Activated T-helper 2 cell treated with anti-CD3 and anti-CD28 coated beads, Interferon-gamma antibody, Interleukin-2, Interleukin-4, amounts not matched to agents 10 μg/mL and 5 μg/mL and 100 μg/mL, durations not matched to agents 14 hours and 24 hours and 36 hours (primary cell): ENCODE measurements at regions of chr6 and their contacts with region 1.

Region 1: DNA sequence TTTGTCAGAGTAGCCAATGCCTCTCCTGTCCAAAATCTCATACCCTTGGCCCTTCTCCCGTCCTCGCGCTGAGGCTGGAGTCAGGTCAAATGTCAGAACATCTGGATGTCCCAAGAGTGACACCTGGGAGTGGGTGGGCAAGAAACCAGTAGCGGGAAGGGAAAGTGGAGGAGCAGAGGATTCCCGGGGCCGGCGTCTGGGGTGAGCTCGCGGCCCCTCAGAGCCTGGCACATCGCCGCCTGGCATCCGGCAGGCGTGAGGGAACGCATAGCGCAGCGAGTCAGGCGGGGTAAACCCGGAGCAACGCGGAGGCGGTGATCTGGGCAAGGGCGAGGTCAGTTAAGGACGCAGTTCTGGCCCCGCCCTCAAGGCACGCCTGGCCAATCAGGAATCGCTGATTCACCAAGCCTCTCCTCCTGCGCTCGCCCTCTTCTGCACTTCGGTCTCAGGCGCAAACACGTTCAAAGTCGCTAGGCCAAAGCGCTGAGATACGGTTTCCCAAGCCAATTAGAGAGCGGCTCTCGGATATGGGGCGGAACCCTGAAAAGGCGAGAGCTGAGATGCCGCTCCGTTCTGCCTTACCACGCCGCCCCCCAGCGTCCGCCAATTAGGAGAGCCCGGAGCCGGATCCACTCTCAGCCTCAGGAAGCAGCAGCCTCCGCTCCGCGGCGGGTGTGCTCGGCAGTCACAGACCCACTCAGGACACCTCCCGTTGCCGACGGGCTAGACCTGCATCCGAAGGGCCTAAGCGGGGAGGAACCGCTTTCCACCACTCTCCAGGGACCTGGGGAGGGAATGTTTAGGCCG is 22.5 kb downstream of the VPS52 start:
- DNase-seq: peak; percentile 97
- H3K4me3 Mint-ChIP-seq: peak overlapping the region; percentile 88
- H3K27ac Mint-ChIP-seq: peak overlapping the region; percentile 92
- H3K4me1 Mint-ChIP-seq: peaks cover 32% of the 10 kb centered on the region
- H3K27me3 Mint-ChIP-seq: no peaks in the 10 kb centered on the region

Region 2: GRCh38 chr6:33118525-33119123 is 130.5 kb before region 1 on chr6:
- intact Hi-C with region 1: loop called (anchors 1 kb)
- DNase-seq: no peak
- H3K4me3 Mint-ChIP-seq: no peak overlapping the region
- H3K27ac Mint-ChIP-seq: no peak overlapping the region
- H3K4me1 Mint-ChIP-seq: peaks cover 6% of the 10 kb centered on the region
- H3K27me3 Mint-ChIP-seq: peaks cover 61% of the 10 kb centered on the region

Region 3: GRCh38 chr6:33161354-33162331 is 87.5 kb before region 1 on chr6:
- intact Hi-C with region 1: loop called (anchors 1 kb)
- DNase-seq: peak; percentile 77
- H3K4me3 Mint-ChIP-seq: peak overlapping the region; percentile 83
- H3K27ac Mint-ChIP-seq: peak overlapping the region; percentile 80
- H3K4me1 Mint-ChIP-seq: peaks cover 14% of the 10 kb centered on the region
- H3K27me3 Mint-ChIP-seq: peaks cover under 1% of the 10 kb centered on the region

Region 4: DNA sequence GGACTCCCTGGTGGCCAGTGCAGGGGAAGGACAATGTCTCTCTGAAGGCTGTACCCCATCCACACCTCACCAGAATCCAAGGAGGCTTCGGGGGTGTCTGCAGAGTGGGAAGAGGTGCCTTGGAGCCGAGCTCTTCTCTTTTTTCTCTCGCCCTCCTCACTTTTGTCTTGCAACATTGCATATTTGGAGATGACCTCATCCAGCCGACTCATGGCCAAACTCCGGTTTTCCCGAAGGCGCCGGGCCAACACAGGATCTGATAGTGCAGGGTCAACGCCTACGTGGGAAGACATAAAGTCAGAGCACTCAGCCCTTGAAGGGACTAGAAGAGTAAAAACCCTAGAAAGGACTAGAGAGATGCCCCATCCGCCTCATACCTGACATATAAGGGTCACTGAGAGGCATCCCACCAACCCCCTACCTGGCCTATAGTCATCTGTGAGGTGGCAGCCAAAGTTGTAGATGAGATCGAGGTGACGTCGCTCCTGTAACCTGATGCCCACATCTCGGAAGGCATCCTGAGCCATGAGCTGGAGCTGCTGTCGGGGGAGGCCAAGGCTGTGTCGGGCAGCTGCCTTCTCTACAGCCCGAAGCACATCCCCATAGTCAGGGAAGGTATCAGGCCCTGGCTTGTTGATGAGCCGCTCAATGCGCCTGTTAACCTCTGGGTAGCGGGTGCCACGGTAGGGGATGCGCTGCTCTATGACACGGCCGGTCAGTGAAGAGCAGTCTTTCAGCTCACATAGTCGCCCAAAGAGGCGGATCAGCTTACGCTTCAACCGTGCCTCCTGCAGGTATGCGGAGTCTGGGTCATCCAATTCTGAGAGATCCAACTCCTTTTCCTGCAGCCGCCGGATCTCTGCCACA is 71.4 kb after region 1 on chr6:
- intact Hi-C with region 1: no loop called
- DNase-seq: no peak
- H3K4me3 Mint-ChIP-seq: peak overlapping the region; percentile 81
- H3K27ac Mint-ChIP-seq: no peak overlapping the region
- H3K4me1 Mint-ChIP-seq: peaks cover 49% of the 10 kb centered on the region
- H3K27me3 Mint-ChIP-seq: no peaks in the 10 kb centered on the region